ENCODE measurements at regions of chr7 and their contacts with region 1.

Region 1: DNA sequence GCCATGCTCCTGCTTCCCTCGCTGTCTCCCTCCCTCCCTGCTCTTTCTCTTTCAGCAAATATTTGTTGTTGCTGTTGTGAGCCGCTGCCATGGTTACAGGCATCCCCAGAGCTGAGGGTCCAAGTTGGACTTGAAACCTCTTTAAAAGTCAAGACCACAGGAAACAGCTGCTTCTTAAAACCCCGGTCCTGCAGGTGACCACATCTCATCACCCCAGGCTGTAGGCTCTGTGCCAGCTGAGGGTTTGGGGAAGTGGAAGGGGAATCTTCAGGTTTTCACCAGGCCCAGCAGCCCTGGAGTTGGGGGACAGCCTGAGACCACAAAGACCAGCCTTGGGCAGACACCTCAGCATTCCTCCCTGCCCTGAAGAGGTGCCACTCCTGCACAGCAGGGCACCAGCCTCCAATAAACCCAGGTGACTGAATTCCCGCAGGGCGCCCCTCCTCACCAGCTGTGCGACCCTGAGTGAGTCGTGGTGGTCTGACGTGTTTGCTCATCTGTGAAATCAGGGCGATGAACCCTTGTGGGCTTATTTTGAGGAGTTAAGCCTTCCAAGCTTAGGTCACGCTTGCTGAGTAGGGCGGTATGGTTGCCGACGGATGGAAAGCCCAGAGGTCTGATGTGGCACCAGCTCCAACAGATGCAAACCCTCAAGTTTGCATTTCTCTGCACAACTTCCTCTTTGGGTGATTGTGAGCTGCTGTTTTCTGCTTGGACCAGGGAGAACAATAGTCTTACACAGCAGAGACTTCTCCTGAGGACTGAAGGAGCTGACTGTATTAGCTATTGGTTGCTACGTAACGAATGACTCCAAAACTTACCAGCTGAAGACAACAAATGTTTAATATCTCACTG is 24.8 kb downstream of the NPTX2 start:
- DNase-seq: no peak
- ATAC-seq: peak; percentile 71
- H3K4me3 Mint-ChIP-seq: peak overlapping the region; percentile 44
- H3K27ac Mint-ChIP-seq: peak overlapping the region; percentile 67
- H3K4me1 Mint-ChIP-seq: peaks cover 21% of the 10 kb centered on the region
- H3K27me3 Mint-ChIP-seq: peaks cover 6% of the 10 kb centered on the region
- CTCF ChIP-seq: no peak

Region 2: DNA sequence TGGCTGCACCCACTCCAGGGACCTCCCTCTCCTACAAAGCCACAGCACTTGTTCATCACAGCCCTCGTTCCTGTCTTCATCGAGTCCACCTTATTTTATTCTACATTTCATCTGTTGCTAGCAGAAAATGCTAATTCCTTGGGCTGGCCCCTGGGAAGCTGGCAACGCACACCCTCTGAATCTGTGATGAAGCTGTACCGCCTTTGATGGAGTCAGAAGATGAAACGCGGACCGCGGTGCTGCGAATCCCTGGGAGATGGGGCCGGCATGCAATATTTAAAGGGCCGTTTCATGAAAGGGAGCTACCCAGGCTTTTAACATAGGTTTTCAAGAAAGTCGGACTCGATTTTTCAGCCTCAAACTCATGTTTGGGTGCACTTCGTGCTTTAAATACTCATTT is 63.8 kb after region 1 on chr7:
- CTCF ChIA-PET with region 1: no interaction called
- POLR2A ChIA-PET with region 1: no interaction called
- intact Hi-C with region 1: loop called (anchors 5 kb)
- DNase-seq: no peak
- ATAC-seq: no peak
- H3K4me3 Mint-ChIP-seq: no peak overlapping the region
- H3K27ac Mint-ChIP-seq: no peak overlapping the region
- H3K4me1 Mint-ChIP-seq: peaks cover 2% of the 10 kb centered on the region
- H3K27me3 Mint-ChIP-seq: peaks cover 15% of the 10 kb centered on the region
- CTCF ChIP-seq: no peak

Region 3: GRCh38 chr7:98745722-98746318 is 103.9 kb after region 1 on chr7:
- CTCF ChIA-PET with region 1: no interaction called
- POLR2A ChIA-PET with region 1: no interaction called
- intact Hi-C with region 1: loop called (anchors 5 kb)
- DNase-seq: peak; percentile 62
- ATAC-seq: peak; percentile 31
- H3K4me3 Mint-ChIP-seq: no peak overlapping the region
- H3K27ac Mint-ChIP-seq: no peak overlapping the region
- H3K4me1 Mint-ChIP-seq: no peaks in the 10 kb centered on the region
- H3K27me3 Mint-ChIP-seq: peaks cover 12% of the 10 kb centered on the region
- CTCF ChIP-seq: peak; percentile 87